PC-9 (cell line): ENCODE measurements at regions of chr12 and their contacts with region 1.

Region 1: GRCh38 chr12:59874781-59875180 is 279.0 kb downstream of the SLC16A7 start:
- DNase-seq: no peak
- H3K4me3 ChIP-seq: no peak overlapping the region
- H3K27ac ChIP-seq: no peak overlapping the region
- H3K4me1 ChIP-seq: no peaks in the 10 kb centered on the region
- H3K27me3 ChIP-seq: no peaks in the 10 kb centered on the region
- CTCF ChIP-seq: no peak

Region 2: GRCh38 chr12:59699421-59700152 is 175.2 kb before region 1 on chr12:
- CTCF ChIA-PET with region 1: no interaction called
- POLR2A ChIA-PET with region 1: no interaction called
- intact Hi-C with region 1: no loop called
- DNase-seq: no peak
- H3K4me3 ChIP-seq: no peak overlapping the region
- H3K27ac ChIP-seq: no peak overlapping the region
- H3K4me1 ChIP-seq: no peaks in the 10 kb centered on the region
- H3K27me3 ChIP-seq: no peaks in the 10 kb centered on the region
- CTCF ChIP-seq: no peak

Region 3: GRCh38 chr12:60752589-60752988 is 877.8 kb after region 1 on chr12:
- CTCF ChIA-PET with region 1: interaction called, 11 read pairs
- POLR2A ChIA-PET with region 1: no interaction called
- intact Hi-C with region 1: no loop called
- DNase-seq: no peak
- H3K4me3 ChIP-seq: no peak overlapping the region
- H3K27ac ChIP-seq: no peak overlapping the region
- H3K4me1 ChIP-seq: no peaks in the 10 kb centered on the region
- H3K27me3 ChIP-seq: no peaks in the 10 kb centered on the region
- CTCF ChIP-seq: no peak